PC-3 (cell line): ENCODE measurements at regions of chr2 and their contacts with region 1.

Region 1: GRCh38 chr2:85017411-85018048 is 46.6 kb downstream of the KCMF1 start:
- DNase-seq: peak; percentile 53
- ATAC-seq: no peak
- H3K4me3 ChIP-seq: no peak overlapping the region
- H3K27ac ChIP-seq: peak overlapping the region; percentile 91
- H3K4me1 ChIP-seq: peaks cover 41% of the 10 kb centered on the region
- H3K27me3 ChIP-seq: no peaks in the 10 kb centered on the region
- CTCF ChIP-seq: peak; percentile 52; the same call in 1 of the 2 replicates

Region 2: DNA sequence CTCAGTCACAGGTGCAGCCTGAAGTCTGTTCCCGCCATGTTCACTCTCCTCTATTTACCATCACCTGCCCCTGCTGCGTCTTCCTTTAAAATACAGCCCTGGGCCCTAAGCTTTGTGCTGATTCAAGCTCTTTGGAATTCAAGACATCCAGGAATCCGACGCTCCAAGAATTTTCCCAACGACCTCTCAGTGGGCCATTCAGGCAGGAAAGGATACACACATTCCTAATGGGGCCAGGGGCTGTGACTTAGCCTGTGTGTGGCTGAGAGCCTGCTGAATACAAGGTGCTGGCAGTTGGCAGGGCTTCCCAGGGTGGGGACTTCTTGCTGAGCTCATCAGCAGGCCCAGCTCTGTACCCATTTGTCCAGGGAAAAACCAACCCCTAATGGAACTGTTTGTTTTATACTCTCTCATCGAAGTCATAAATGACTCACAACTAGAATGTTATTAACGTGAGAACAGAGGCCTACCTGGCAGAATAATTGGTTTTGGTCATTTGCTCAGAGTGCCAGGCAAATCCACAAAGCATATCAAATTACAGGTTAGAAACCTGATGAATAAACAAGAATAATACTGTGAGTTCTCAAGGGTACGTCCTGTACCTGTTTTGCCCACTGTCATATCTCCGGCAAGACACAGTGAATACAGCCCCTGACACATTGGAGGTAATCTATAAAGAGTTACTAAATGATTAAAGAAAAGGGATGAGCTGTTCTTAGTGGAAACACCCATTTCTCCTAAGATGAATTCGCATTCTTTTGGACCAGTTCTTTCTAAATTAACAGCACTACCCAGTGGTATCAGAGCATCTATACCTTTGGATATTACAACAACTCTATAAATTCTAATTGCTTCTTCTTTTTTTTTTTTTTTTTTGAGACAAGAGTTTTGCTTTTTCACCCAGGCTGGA is 59.1 kb before region 1 on chr2:
- CTCF ChIA-PET with region 1: interaction called, 10 read pairs
- POLR2A ChIA-PET with region 1: interaction called, 5 read pairs
- intact Hi-C with region 1: loop called (anchors 1 kb)
- DNase-seq: peak; percentile 99
- ATAC-seq: peak; percentile 92
- H3K4me3 ChIP-seq: peak overlapping the region; percentile 41; the same call in 1 of the 2 replicates
- H3K27ac ChIP-seq: peak overlapping the region; percentile 99
- H3K4me1 ChIP-seq: peaks cover 42% of the 10 kb centered on the region
- H3K27me3 ChIP-seq: no peaks in the 10 kb centered on the region
- CTCF ChIP-seq: no peak

Region 3: DNA sequence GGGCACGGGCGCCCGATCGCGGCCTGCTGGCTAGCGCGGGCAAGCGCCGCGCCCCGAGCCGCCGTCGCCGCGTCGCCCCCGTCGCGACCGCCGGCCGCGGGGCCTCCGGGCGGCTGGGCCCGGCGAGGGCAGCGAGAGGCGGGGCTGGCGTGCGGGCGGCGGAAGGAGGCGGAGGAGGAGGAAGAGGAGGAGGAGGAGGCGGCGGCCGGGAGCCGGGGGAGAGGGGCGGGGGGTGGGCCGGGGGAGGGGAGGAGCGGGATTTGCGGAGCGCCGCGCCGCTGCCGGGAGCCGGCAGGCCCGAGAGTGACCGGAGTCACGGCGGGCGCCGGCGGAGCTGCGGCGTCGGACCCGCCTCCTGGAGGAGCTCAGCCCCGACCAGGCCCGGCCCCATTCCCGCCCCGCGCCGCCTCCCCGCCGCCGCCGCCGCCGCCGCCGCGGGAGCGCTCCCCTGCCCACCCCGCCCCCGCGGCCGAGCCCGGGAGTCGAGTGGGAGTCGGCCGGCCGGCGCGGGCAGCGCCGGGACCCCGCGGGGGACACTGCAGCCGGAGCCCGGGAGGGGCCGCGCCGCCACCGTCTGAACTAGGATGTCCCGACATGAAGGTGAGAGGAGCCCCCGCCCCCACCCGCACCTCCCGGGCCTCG is 46.5 kb before region 1 on chr2 and contains the start of gene KCMF1:
- CTCF ChIA-PET with region 1: no interaction called
- POLR2A ChIA-PET with region 1: interaction called, 5 read pairs
- intact Hi-C with region 1: loop called (anchors 1 kb)
- DNase-seq: peak; percentile 75
- ATAC-seq: peak; percentile 72
- H3K4me3 ChIP-seq: peak within 1 kb of the TSS; percentile 82
- H3K27ac ChIP-seq: peak within 1 kb of the TSS; percentile 82
- H3K4me1 ChIP-seq: peaks cover 27% of the 10 kb centered on the region; the same call in 1 of the 2 replicates
- H3K27me3 ChIP-seq: no peaks in the 10 kb centered on the region
- CTCF ChIP-seq: no peak
- total RNA-seq, gene KCMF1: 62.1 and 73.6 TPM in 2 replicates

Region 4: GRCh38 chr2:84996906-84997305 is 20.6 kb before region 1 on chr2:
- CTCF ChIA-PET with region 1: no interaction called
- POLR2A ChIA-PET with region 1: no interaction called
- intact Hi-C with region 1: no loop called
- DNase-seq: peak; percentile 82
- ATAC-seq: peak; percentile 94
- H3K4me3 ChIP-seq: no peak overlapping the region
- H3K27ac ChIP-seq: peak overlapping the region; percentile 92
- H3K4me1 ChIP-seq: peaks cover 26% of the 10 kb centered on the region
- H3K27me3 ChIP-seq: no peaks in the 10 kb centered on the region
- CTCF ChIP-seq: no peak

Region 5: GRCh38 chr2:85032621-85033020 is 15.1 kb after region 1 on chr2:
- CTCF ChIA-PET with region 1: no interaction called
- POLR2A ChIA-PET with region 1: no interaction called
- intact Hi-C with region 1: no loop called
- DNase-seq: peak; percentile 64
- ATAC-seq: peak; percentile 89
- H3K4me3 ChIP-seq: no peak overlapping the region
- H3K27ac ChIP-seq: peak overlapping the region; percentile 7; the same call in 1 of the 2 replicates
- H3K4me1 ChIP-seq: peaks cover 7% of the 10 kb centered on the region; the same call in 1 of the 2 replicates
- H3K27me3 ChIP-seq: no peaks in the 10 kb centered on the region
- CTCF ChIP-seq: no peak

Region 6: DNA sequence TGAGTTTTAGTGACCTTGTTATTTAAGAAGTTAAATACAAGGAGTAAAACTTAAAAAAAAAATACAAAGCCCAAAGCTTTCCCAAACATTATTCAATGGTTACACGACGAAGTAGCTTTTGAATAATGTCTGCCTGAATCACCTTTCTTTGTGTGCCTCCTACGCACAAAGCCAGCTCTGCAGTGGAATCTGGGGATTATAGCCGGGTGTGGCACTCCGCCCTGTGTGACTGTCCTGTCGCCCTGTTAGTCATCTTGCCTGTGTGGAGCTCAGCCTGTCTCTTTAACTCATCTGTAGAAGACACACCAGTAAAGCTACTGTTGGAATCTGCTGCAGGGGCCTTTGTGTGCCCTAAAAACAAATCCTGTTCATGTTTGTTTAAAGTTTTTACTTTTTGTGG is 36.3 kb after region 1 on chr2:
- CTCF ChIA-PET with region 1: interaction called, 10 read pairs
- POLR2A ChIA-PET with region 1: interaction called, 6 read pairs
- intact Hi-C with region 1: no loop called
- DNase-seq: peak; percentile 91
- ATAC-seq: peak; percentile 100
- H3K4me3 ChIP-seq: peak overlapping the region; percentile 6; the same call in 1 of the 2 replicates
- H3K27ac ChIP-seq: peak overlapping the region; percentile 89
- H3K4me1 ChIP-seq: peaks cover 23% of the 10 kb centered on the region
- H3K27me3 ChIP-seq: no peaks in the 10 kb centered on the region
- CTCF ChIP-seq: no peak

Region 7: DNA sequence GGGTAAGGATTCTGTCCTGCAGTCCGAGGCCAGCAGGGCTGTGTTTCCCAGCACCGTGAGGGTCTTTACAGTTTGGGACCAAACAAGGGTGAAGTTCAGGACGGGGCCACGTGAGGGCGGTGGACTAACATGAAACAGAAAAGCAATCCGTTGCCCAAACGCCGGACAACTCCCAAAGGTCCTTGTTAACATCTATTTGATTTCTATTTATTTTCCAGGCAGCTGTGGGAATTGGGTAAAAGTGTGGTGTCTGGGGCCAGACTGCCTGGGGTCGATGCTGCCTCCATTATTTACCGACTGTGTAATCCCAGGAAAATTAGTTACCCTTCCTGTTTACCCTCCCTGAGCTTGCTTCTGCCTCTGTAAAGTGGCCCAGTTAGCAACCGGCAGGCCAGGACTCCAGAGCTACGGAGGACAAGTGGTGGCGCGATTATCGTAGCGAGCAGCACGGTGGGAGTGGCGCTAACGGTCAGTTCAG is 49.4 kb after region 1 on chr2:
- CTCF ChIA-PET with region 1: interaction called, 10 read pairs
- POLR2A ChIA-PET with region 1: no interaction called
- intact Hi-C with region 1: no loop called
- DNase-seq: peak; percentile 83
- ATAC-seq: peak; percentile 86
- H3K4me3 ChIP-seq: peak overlapping the region; percentile 57; the same call in 1 of the 2 replicates
- H3K27ac ChIP-seq: no peak overlapping the region
- H3K4me1 ChIP-seq: peaks cover 10% of the 10 kb centered on the region; the same call in 1 of the 2 replicates
- H3K27me3 ChIP-seq: no peaks in the 10 kb centered on the region
- CTCF ChIP-seq: peak; percentile 92

Region 8: GRCh38 chr2:85302121-85302520 is 284.6 kb after region 1 on chr2:
- CTCF ChIA-PET with region 1: interaction called, 3 read pairs
- POLR2A ChIA-PET with region 1: no interaction called
- intact Hi-C with region 1: loop called (anchors 2 kb)
- DNase-seq: no peak
- ATAC-seq: no peak
- H3K4me3 ChIP-seq: no peak overlapping the region
- H3K27ac ChIP-seq: no peak overlapping the region
- H3K4me1 ChIP-seq: no peaks in the 10 kb centered on the region
- H3K27me3 ChIP-seq: no peaks in the 10 kb centered on the region
- CTCF ChIP-seq: no peak